Activated CD4-positive, alpha-beta memory T cell treated with anti-CD3 and anti-CD28 coated beads for 36 hours (primary cell): ENCODE measurements at regions of chr11 and their contacts with region 1.

Region 1: GRCh38 chr11:108593214-108593922 is at the start of gene EXPH5:
- DNase-seq: peak; percentile 93
- H3K4me3 Mint-ChIP-seq: peak within 1 kb of the TSS; percentile 87
- H3K27ac Mint-ChIP-seq: peak within 1 kb of the TSS; percentile 68
- H3K4me1 Mint-ChIP-seq: peaks cover 17% of the 10 kb centered on the region
- H3K27me3 Mint-ChIP-seq: peaks cover 11% of the 10 kb centered on the region
- total RNA-seq, gene EXPH5: 1.4 to 1.8 TPM

Region 2: GRCh38 chr11:108474664-108475485 is 118.5 kb before region 1 on chr11:
- CTCF ChIA-PET with region 1: no interaction called
- POLR2A ChIA-PET with region 1: no interaction called
- intact Hi-C with region 1: no loop called
- DNase-seq: no peak
- H3K4me3 Mint-ChIP-seq: no peak overlapping the region
- H3K27ac Mint-ChIP-seq: no peak overlapping the region
- H3K4me1 Mint-ChIP-seq: no peaks in the 10 kb centered on the region
- H3K27me3 Mint-ChIP-seq: no peaks in the 10 kb centered on the region

Region 3: GRCh38 chr11:108664730-108665525 is 71.6 kb after region 1 on chr11 and contains the start of gene DDX10:
- CTCF ChIA-PET with region 1: no interaction called
- POLR2A ChIA-PET with region 1: interaction called, 3 read pairs
- intact Hi-C with region 1: loop called (anchors 2 kb)
- DNase-seq: peak; percentile 99
- H3K4me3 Mint-ChIP-seq: peak within 1 kb of the TSS; percentile 100
- H3K27ac Mint-ChIP-seq: peak within 1 kb of the TSS; percentile 80
- H3K4me1 Mint-ChIP-seq: peaks cover 44% of the 10 kb centered on the region
- H3K27me3 Mint-ChIP-seq: no peaks in the 10 kb centered on the region
- total RNA-seq, gene DDX10: 34.8 to 37.7 TPM

Region 4: DNA sequence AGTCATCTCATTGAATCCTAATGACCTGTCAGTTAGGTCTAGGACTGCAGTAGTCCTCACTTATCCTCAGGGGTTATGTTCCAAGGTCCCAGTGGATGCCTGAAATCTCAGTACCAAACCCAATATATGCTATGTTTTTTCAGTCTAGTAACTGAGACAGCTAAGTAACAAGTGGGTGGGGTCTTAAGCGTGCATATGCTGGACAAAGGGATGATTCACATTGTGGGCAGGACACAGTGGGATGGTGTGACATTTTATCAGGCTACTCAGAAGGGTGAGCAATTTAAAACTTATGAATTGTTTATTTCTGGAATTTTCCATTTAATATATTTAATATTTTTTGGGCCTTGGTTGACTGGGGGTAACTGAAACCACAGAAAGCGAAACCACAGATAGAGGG is 100.5 kb after region 1 on chr11:
- CTCF ChIA-PET with region 1: no interaction called
- POLR2A ChIA-PET with region 1: no interaction called
- intact Hi-C with region 1: no loop called
- DNase-seq: no peak
- H3K4me3 Mint-ChIP-seq: no peak overlapping the region
- H3K27ac Mint-ChIP-seq: no peak overlapping the region
- H3K4me1 Mint-ChIP-seq: peaks cover 2% of the 10 kb centered on the region
- H3K27me3 Mint-ChIP-seq: no peaks in the 10 kb centered on the region